Transverse colon (tissue), 4 donors: ENCODE measurements at regions of chr3 and their contacts with region 1.

Region 1: GRCh38 chr3:169966428-169966950 is at the start of gene SEC62:
- DNase-seq: peak; percentile 96
- H3K4me3 ChIP-seq: peak within 1 kb of the TSS; percentile 84 to 87 (median 84)
- H3K27ac ChIP-seq: peak within 1 kb of the TSS; percentile 95 to 97 (median 95)
- H3K4me1 ChIP-seq: peaks cover 14 to 44% (median 28%) of the 10 kb centered on the region in 4 donors
- H3K27me3 ChIP-seq: no peaks in the 10 kb centered on the region
- CTCF ChIP-seq: peak in 3 of 5 experiments; percentile 39 to 67 (median 56)
- EP300 ChIP-seq: no peak
- POLR2A ChIP-seq: peak; percentile 80
- total RNA-seq, gene SEC62: 18.7 to 48.7 (median 30.0) TPM

Region 2: GRCh38 chr3:169772897-169773828 is 193.3 kb before region 1 on chr3 and contains the start of gene MYNN:
- in situ Hi-C with region 1: no loop called
- intact Hi-C with region 1: loop called (anchors 10 kb)
- DNase-seq: peak; percentile 95
- H3K4me3 ChIP-seq: peak within 1 kb of the TSS; percentile 58 to 92 (median 86)
- H3K27ac ChIP-seq: peak within 1 kb of the TSS; percentile 98 to 100 (median 99)
- H3K4me1 ChIP-seq: peaks cover 12 to 39% (median 22%) of the 10 kb centered on the region in 4 donors
- H3K27me3 ChIP-seq: no peaks in the 10 kb centered on the region
- CTCF ChIP-seq: peak in 1 of 5 experiments; percentile 16
- EP300 ChIP-seq: no peak
- POLR2A ChIP-seq: peak; percentile 99
- total RNA-seq, gene MYNN: 7.0 to 27.3 (median 18.1) TPM

Region 3: GRCh38 chr3:169863458-169863899 is 103.0 kb before region 1 on chr3:
- in situ Hi-C with region 1: loop called in 1 of 4 experiments (anchors 25 kb)
- intact Hi-C with region 1: loop called (anchors 10 kb)
- DNase-seq: peak; percentile 85
- H3K4me3 ChIP-seq: no peak overlapping the region
- H3K27ac ChIP-seq: peak overlapping the region in 3 of 4 donors; percentile 21 to 84 (median 27)
- H3K4me1 ChIP-seq: peaks cover 0 to 45% (median 9%) of the 10 kb centered on the region in 4 donors
- H3K27me3 ChIP-seq: no peaks in the 10 kb centered on the region
- CTCF ChIP-seq: peak; percentile 89 to 96 (median 91)
- EP300 ChIP-seq: no peak
- POLR2A ChIP-seq: no peak